Activated B cell treated with CpG ODN at 0.5 μM for 24 hours (primary cell): ENCODE measurements at regions of chr19 and their contacts with region 1.

Region 1: GRCh38 chr19:44207126-44207803 is 5.1 kb upstream of the ZNF227 start:
- DNase-seq: peak; percentile 71
- ATAC-seq: peak; percentile 91
- H3K4me3 Mint-ChIP-seq: peak overlapping the region; percentile 94
- H3K27ac Mint-ChIP-seq: peak overlapping the region; percentile 86
- H3K4me1 Mint-ChIP-seq: peaks cover 8% of the 10 kb centered on the region
- H3K27me3 Mint-ChIP-seq: peaks cover 3% of the 10 kb centered on the region
- CTCF ChIP-seq: no peak

Region 2: GRCh38 chr19:43901395-43902390 is 305.6 kb before region 1 on chr19:
- CTCF ChIA-PET with region 1: no interaction called
- POLR2A ChIA-PET with region 1: no interaction called
- intact Hi-C with region 1: loop called (anchors 5 kb)
- DNase-seq: peak; percentile 62
- ATAC-seq: peak; percentile 96
- H3K4me3 Mint-ChIP-seq: peak overlapping the region; percentile 93
- H3K27ac Mint-ChIP-seq: peak overlapping the region; percentile 82
- H3K4me1 Mint-ChIP-seq: peaks cover 18% of the 10 kb centered on the region
- H3K27me3 Mint-ChIP-seq: no peaks in the 10 kb centered on the region
- CTCF ChIP-seq: no peak

Region 3: DNA sequence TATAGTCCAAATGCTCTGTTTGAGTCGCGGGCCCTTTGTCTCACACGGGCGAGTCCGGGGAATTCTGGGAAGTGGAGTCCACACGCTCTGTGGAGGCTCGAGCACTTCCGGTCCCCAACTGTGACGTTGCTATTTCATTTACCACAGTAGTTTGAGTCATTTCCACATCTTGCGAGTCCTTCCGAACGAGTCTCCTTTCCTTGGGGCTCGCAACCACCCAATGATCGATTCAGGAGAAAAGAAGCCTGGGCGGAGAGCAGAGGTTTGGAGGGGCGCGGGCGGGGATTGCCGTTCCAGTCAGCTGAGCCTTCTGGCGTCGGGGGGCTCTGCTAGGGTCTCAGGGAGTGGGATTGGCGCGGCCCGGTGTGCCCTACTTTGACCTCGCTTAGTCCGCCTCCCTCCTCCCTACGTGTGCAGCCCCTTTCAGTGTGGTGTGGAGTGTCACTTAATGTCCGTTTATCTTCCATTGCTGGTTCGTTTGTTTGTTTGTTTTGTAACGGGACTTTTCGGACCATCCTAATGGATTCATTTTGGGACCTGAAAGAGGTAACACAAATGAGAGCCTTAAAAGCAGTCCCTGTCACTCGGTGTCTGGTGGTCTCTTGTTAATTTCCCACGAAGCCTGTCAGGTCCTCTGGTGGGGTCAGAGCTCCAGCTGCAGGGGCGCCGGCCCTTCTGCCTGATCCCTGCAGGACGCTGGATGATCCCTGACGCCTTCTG is 181.9 kb before region 1 on chr19 and contains the start of gene ZNF222:
- CTCF ChIA-PET with region 1: no interaction called
- POLR2A ChIA-PET with region 1: interaction called, 4 read pairs
- intact Hi-C with region 1: loop called (anchors 1 kb)
- DNase-seq: peak; percentile 57
- ATAC-seq: peak; percentile 99
- H3K4me3 Mint-ChIP-seq: peak within 1 kb of the TSS; percentile 98
- H3K27ac Mint-ChIP-seq: peak within 1 kb of the TSS; percentile 85
- H3K4me1 Mint-ChIP-seq: peaks cover 18% of the 10 kb centered on the region
- H3K27me3 Mint-ChIP-seq: peaks cover 6% of the 10 kb centered on the region
- CTCF ChIP-seq: no peak
- total RNA-seq, gene ZNF222: 6.0 and 6.7 TPM in 2 replicates

Region 4: DNA sequence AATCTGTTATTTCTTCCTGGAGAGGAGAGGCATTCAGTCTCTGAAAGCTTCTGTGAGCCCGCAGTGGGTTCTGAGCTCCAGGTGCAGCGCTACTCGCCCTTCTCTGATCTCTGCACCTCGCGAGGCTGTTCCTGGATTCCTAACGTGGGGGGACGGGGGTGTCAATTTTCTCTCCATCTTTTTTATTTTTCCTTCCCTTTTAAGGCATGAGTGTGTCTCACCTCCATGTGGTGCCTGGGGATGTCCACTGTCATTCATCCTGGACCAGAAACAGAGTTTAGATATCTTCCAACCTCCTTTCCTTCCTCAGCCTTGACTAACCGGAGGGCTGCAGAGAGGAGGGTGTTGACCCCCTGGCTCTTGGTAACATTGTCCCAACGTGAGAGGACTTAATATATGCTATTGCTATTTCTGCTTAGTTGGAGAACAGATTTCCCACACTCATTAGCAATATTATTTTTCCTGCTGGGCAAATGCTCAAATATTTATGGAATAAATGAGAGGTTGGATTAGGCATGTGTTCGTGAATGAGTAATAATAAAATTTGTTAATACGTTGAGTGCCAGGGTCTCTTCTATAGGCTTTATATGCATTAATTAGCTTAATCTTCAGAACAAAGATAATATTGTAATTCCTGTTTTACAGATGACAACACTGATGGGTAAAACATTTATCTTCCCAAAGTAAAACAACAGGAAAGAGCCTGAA is 53.3 kb after region 1 on chr19:
- CTCF ChIA-PET with region 1: no interaction called
- POLR2A ChIA-PET with region 1: interaction called, 3 read pairs
- intact Hi-C with region 1: loop called (anchors 1 kb)
- DNase-seq: no peak
- ATAC-seq: no peak
- H3K4me3 Mint-ChIP-seq: peak overlapping the region; percentile 79
- H3K27ac Mint-ChIP-seq: peak overlapping the region; percentile 61
- H3K4me1 Mint-ChIP-seq: peaks cover 11% of the 10 kb centered on the region
- H3K27me3 Mint-ChIP-seq: no peaks in the 10 kb centered on the region
- CTCF ChIP-seq: no peak

Region 5: GRCh38 chr19:44304659-44305193 is 97.5 kb after region 1 on chr19 and contains the start of gene ZNF235:
- CTCF ChIA-PET with region 1: no interaction called
- POLR2A ChIA-PET with region 1: interaction called, 23 read pairs
- intact Hi-C with region 1: loop called (anchors 1 kb)
- DNase-seq: peak; percentile 61
- ATAC-seq: peak; percentile 97
- H3K4me3 Mint-ChIP-seq: peak within 1 kb of the TSS; percentile 96
- H3K27ac Mint-ChIP-seq: peak within 1 kb of the TSS; percentile 76
- H3K4me1 Mint-ChIP-seq: peaks cover 20% of the 10 kb centered on the region
- H3K27me3 Mint-ChIP-seq: peaks cover 7% of the 10 kb centered on the region
- CTCF ChIP-seq: no peak
- total RNA-seq, gene ZNF235: 11.6 and 14.5 TPM in 2 replicates

Region 6: DNA sequence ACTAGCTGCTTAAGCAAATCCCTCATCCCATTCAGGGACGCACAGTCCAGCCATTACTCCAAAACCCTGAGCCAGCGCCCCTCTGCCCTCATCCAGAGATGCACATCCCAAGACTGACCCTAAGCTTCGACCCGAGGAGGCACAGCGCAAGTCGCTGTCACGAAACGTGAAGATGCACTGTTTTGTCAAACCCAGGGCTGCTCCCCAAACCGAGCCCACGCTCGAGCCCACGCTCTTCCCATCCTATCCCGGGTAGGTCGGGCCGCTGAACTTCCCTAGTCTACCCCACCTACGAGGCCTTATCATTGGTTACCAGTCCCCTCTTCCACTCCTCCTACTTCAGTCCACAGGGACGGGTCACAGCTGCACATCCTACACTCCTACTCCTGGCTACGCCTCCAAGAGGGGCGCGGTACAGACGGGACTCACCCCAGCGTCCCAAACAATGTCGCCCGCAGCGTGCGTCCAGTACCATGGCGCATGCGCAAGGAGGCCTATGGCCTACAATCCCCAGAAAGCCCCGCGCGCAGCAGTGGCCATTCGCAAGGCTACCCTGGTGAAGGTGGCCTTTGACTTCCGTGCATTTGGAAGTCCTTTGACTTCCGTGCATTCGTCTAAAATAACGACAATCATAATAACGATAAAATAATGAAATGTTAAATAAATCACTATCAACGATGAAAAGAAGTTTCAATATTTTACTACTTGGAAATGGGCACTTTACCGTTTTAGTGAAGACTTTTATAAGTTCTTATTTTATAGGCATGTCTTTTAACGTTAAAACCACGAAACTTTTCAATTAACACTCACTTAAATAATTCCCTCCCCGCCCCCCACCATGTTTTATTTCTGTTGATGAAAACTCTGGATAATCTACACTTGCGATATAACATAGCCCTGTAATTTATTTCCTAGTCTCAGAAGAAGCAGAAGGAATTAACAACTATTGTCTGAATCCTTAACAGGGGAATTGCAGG is 194.2 kb after region 1 on chr19 and contains the start of gene ZNF285:
- CTCF ChIA-PET with region 1: no interaction called
- POLR2A ChIA-PET with region 1: no interaction called
- intact Hi-C with region 1: loop called (anchors 5 kb)
- DNase-seq: peak; percentile 75
- ATAC-seq: peak; percentile 97
- H3K4me3 Mint-ChIP-seq: peak within 1 kb of the TSS; percentile 88
- H3K27ac Mint-ChIP-seq: peak within 1 kb of the TSS; percentile 46
- H3K4me1 Mint-ChIP-seq: peaks cover 14% of the 10 kb centered on the region
- H3K27me3 Mint-ChIP-seq: peaks cover 14% of the 10 kb centered on the region
- CTCF ChIP-seq: no peak
- total RNA-seq, gene ZNF285: 4.5 TPM in 2 replicates